Activated T-helper 1 cell treated with anti-CD3 and anti-CD28 coated beads, Interleukin-12 subunit alpha, Interleukin-12 subunit beta, Interleukin-2, Interleukin-4 antibody, amounts not matched to agents 30 ng/mL and 10 ng/mL and 1 ng/mL, durations not matched to agents 14 hours and 24 hours and 36 hours (primary cell): ENCODE measurements at regions of chr11 and their contacts with region 1.

Region 1: DNA sequence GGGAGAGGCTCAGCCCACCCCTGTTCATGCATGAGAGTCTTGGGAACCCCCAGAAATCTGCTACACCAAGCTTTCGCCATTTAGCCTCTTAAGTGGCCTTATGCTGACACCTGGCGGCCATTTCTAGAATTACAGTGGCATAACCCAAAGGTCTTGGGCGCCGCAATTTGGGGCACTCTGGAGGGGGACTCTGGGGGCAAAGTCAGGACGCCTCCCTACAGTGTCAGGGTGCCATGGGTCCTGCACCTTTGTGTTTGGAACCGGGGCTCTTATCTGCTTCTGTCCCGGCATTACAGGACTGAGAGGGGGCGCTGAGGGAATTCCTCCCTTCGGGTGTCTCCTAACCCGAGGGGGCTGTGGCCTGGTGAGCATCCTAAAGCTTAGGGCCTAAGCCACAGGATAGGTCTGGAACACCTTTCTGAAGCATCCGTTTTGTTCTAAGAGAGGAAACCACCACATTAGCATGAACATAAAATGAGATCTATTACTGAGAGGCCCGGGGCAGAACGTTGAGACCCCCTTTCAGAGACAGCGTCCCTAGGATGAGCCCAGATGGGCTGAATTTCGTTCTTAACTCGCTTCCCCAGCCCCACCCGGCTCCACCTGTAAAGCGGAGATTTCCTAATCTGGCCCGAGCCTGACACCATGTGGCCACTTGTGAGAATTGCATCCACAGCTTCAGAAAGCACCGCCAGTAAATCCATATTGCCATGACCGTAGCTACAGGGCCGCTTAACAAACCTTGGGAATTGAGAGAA is 9.3 kb downstream of the INS start:
- DNase-seq: peak; percentile 60
- H3K4me3 Mint-ChIP-seq: no peak overlapping the region
- H3K27ac Mint-ChIP-seq: no peak overlapping the region
- H3K4me1 Mint-ChIP-seq: peaks cover 15% of the 10 kb centered on the region
- H3K27me3 Mint-ChIP-seq: peaks cover 35% of the 10 kb centered on the region

Region 2: DNA sequence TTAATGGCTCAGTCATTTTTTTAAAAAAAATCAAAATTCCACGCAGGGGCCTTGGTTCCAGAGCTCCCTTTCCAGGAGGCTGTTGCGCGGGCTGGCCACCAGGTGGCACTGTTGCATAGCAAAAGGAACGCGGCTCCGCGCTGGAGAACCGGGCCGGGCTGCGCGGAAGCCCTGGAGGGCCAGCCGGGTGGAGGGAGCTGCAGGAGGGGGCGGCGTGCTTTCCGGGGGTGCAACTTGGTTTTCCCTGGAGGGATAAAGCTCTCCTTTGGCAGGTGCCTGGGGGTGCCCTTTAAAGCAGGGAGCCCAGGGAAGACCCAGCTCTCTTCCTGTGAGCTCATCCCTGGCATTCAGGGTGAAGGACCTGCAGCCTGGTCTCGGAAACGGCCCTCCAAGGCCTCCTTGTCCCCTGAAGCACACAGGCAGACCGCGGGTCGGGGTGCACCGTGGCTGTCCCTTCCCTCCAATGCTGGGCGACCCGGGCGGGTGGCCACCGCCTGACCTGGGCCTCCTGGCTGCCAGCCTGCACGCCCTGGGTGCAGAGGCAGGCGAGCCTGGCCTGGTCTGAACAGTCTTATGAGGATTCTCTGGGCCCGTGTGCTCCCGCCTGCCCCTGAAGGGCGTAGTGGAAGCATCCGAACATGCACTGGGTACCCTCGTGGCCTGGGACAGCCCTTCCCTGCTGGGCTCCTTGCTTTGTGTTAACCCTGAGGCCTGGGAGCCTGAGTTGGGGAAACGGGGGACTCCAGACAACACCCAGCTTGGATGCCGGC is 498.7 kb before region 1 on chr11:
- intact Hi-C with region 1: loop called (anchors 1 kb)
- DNase-seq: peak; percentile 66
- H3K4me3 Mint-ChIP-seq: no peak overlapping the region
- H3K27ac Mint-ChIP-seq: no peak overlapping the region
- H3K4me1 Mint-ChIP-seq: no peaks in the 10 kb centered on the region
- H3K27me3 Mint-ChIP-seq: peaks cover 6% of the 10 kb centered on the region

Region 3: GRCh38 chr11:1694064-1694845 is 457.4 kb before region 1 on chr11:
- intact Hi-C with region 1: loop called (anchors 1 kb)
- DNase-seq: peak; percentile 71
- H3K4me3 Mint-ChIP-seq: no peak overlapping the region
- H3K27ac Mint-ChIP-seq: no peak overlapping the region
- H3K4me1 Mint-ChIP-seq: peaks cover 5% of the 10 kb centered on the region
- H3K27me3 Mint-ChIP-seq: peaks cover 14% of the 10 kb centered on the region

Region 4: DNA sequence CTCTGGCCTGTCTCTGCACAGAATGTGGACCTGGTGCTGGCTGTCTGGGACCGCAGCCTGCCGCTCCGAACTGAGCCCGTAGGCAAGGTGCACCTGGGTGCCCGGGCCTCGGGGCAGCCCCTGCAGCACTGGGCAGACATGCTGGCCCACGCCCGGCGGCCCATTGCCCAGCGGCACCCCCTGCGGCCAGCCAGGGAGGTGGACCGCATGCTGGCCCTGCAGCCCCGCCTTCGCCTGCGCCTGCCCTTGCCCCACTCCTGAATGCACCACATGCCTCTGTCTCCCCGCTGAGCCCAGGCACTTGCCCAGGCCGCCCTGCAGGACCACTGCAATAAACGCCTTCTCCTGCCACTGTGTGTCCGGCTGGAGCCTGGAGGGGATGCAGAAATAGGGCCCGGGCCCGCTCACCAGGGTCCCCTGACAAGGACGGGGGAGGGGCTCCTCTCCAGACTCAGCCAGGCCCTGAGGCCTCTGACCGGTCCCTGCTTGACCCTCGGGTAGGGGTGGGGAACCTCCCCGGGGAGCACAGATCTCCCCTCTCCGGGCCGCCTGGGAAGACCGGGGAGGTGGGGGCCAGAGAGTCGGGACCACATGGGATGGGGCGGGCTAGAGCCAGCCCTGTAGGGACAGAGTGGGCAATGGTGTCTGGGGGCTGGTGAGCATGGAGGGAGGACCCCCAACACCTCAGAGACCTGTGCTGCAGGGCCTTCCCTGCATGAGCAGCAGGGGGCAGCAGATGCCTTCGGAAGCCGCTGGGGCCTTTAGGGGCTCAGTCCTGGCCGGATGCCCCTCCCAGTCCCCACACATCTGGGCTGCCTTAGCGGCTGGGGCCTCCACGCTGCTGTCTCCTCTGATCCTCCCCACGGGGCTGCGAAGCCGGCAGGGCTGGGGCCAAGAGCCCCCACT is 314.3 kb before region 1 on chr11:
- intact Hi-C with region 1: loop called (anchors 1 kb)
- DNase-seq: peak; percentile 61
- H3K4me3 Mint-ChIP-seq: no peak overlapping the region
- H3K27ac Mint-ChIP-seq: no peak overlapping the region
- H3K4me1 Mint-ChIP-seq: no peaks in the 10 kb centered on the region
- H3K27me3 Mint-ChIP-seq: peaks cover 2% of the 10 kb centered on the region

Region 5: GRCh38 chr11:1882519-1883238 is 269.0 kb before region 1 on chr11:
- intact Hi-C with region 1: loop called (anchors 1 kb)
- DNase-seq: peak; percentile 60
- H3K4me3 Mint-ChIP-seq: no peak overlapping the region
- H3K27ac Mint-ChIP-seq: no peak overlapping the region
- H3K4me1 Mint-ChIP-seq: no peaks in the 10 kb centered on the region
- H3K27me3 Mint-ChIP-seq: no peaks in the 10 kb centered on the region

Region 6: GRCh38 chr11:2077061-2077802 is 74.4 kb before region 1 on chr11:
- intact Hi-C with region 1: loop called (anchors 2 kb)
- DNase-seq: peak; percentile 44
- H3K4me3 Mint-ChIP-seq: no peak overlapping the region
- H3K27ac Mint-ChIP-seq: peak overlapping the region; percentile 93
- H3K4me1 Mint-ChIP-seq: peaks cover 27% of the 10 kb centered on the region
- H3K27me3 Mint-ChIP-seq: peaks cover 4% of the 10 kb centered on the region

Region 7: GRCh38 chr11:2290351-2290841 is 138.7 kb after region 1 on chr11:
- intact Hi-C with region 1: no loop called
- DNase-seq: no peak
- H3K4me3 Mint-ChIP-seq: no peak overlapping the region
- H3K27ac Mint-ChIP-seq: no peak overlapping the region
- H3K4me1 Mint-ChIP-seq: peaks cover 10% of the 10 kb centered on the region
- H3K27me3 Mint-ChIP-seq: peaks cover 11% of the 10 kb centered on the region